Activated CD8-positive, alpha-beta T cell treated with anti-CD3 and anti-CD28 coated beads, Interleukin-2, amount 10 ng/mL, durations not matched to agents 7 days and 5 days (primary cell): ENCODE measurements at regions of chr21 and their contacts with region 1.

Region 1: DNA sequence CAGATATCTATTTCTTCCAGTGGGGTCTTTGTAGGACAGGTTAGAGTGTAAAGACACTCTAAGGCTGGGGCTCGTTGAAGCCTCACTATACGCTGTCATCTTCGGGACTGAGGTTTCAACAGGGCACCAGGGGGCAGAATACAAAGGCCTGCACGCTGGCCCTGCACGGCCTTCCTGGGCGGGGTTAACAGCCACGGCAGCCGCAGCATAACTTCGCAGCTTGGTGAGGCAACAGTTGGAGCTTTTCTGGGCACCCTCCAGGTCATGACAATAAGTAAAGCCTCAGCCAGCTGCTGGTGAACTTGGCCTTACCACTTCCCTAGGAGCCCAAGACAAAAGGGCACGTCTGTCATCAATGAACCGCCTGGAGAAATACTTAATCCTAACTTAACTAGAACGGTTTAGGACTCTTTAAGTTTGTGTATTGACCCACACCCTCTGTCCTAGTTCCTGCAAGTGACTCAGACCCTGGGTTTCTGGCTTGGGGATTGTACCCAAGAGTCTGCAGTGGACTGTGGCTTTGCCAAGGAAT is 2.3 kb upstream of the RUNX1 start:
- DNase-seq: peak; percentile 88
- ATAC-seq: peak; percentile 57
- H3K4me3 Mint-ChIP-seq: peak overlapping the region; percentile 30
- H3K27ac Mint-ChIP-seq: peak overlapping the region; percentile 66
- H3K4me1 Mint-ChIP-seq: peaks cover 54% of the 10 kb centered on the region
- H3K27me3 Mint-ChIP-seq: peaks cover 10% of the 10 kb centered on the region

Region 2: GRCh38 chr21:34878501-34878900 is 172.9 kb before region 1 on chr21:
- CTCF ChIA-PET with region 1: no interaction called
- POLR2A ChIA-PET with region 1: no interaction called
- DNase-seq: no peak
- ATAC-seq: no peak
- H3K4me3 Mint-ChIP-seq: no peak overlapping the region
- H3K27ac Mint-ChIP-seq: no peak overlapping the region
- H3K4me1 Mint-ChIP-seq: peaks cover 15% of the 10 kb centered on the region
- H3K27me3 Mint-ChIP-seq: no peaks in the 10 kb centered on the region

Region 3: GRCh38 chr21:35026617-35027562 is 24.5 kb before region 1 on chr21:
- CTCF ChIA-PET with region 1: interaction called, 23 read pairs
- POLR2A ChIA-PET with region 1: interaction called, 56 read pairs
- DNase-seq: peak; percentile 91
- ATAC-seq: peak; percentile 93
- H3K4me3 Mint-ChIP-seq: peak overlapping the region; percentile 79
- H3K27ac Mint-ChIP-seq: peak overlapping the region; percentile 99
- H3K4me1 Mint-ChIP-seq: peaks cover 63% of the 10 kb centered on the region
- H3K27me3 Mint-ChIP-seq: peaks cover 3% of the 10 kb centered on the region

Region 4: DNA sequence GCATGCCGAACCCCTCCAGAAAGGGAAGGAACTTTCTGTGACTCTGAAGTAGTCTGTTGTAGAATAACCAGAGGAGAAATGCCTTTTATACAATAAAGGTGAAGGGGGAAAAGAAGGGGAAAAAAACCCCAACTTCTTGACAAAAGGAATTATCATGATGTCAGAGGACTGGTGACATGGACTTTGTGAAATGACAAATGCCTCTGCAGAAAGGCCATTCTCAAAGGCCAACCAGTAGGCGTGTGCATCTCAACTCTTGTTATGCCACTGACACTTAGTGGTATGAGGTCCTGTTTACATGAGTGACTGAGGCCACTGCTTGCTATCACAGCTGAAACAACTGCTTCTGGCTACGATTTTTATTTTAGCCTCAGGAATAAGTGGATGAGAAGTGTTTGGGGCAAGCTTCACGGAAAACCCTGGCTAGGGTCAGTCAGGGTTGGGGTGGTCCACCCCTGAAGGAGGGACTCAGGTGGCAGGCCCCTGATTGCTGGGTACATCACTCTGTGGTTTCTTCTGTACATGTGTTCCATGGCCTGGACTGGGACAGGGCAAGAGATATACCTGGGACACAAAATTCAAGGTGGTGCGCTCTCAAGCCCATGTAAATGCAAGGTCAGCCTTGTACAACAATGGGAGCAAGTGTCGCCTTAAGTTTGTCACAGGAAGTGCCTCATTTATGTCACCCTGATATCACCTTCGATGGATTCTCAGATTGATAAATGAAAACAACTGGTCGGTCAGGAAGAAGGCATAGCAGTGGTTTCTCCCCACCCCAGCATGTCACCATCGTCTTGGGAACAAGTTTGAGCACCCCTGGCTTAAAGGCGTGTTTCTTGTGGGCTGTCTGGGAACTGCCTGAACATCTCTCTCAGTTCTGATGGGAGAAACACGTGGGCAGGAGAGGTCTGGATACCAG is 14.6 kb before region 1 on chr21:
- CTCF ChIA-PET with region 1: interaction called, 11 read pairs
- POLR2A ChIA-PET with region 1: interaction called, 11 read pairs
- DNase-seq: no peak
- ATAC-seq: no peak
- H3K4me3 Mint-ChIP-seq: no peak overlapping the region
- H3K27ac Mint-ChIP-seq: peak overlapping the region; percentile 75
- H3K4me1 Mint-ChIP-seq: peaks cover 75% of the 10 kb centered on the region
- H3K27me3 Mint-ChIP-seq: peaks cover 13% of the 10 kb centered on the region